K562 (cell line): ENCODE measurements at regions of chr9 and their contacts with region 1.

Region 1: GRCh38 chr9:69549310-69550202 is 122.6 kb downstream of the APBA1 start:
- DNase-seq: peak; percentile 26 to 32 (median 29)
- ATAC-seq: peak; percentile 56; the same call in 2 of the 3 replicates
- H3K4me3 ChIP-seq: no peak overlapping the region
- H3K27ac ChIP-seq: no peak overlapping the region
- H3K4me1 ChIP-seq: no peaks in the 10 kb centered on the region
- H3K27me3 ChIP-seq: peaks cover 0 to 8% of the 10 kb centered on the region in 2 experiments; a peak in 1 of 5 replicates
- CTCF ChIP-seq: peak; percentile 55 to 67 (median 62)
- EP300 ChIP-seq: no peak
- POLR2A ChIP-seq: no peak
- RAD21 ChIP-seq: peak; percentile 59 to 67

Region 2: GRCh38 chr9:69066955-69067354 is 482.6 kb before region 1 on chr9:
- CTCF ChIA-PET with region 1: no interaction called
- POLR2A ChIA-PET with region 1: no interaction called
- in situ Hi-C with region 1: loop called (anchors 25 kb)
- intact Hi-C with region 1: no loop called
- DNase-seq: peak in 2 of 4 experiments; percentile 19 to 27
- ATAC-seq: no peak
- H3K4me3 ChIP-seq: no peak overlapping the region
- H3K27ac ChIP-seq: no peak overlapping the region
- H3K4me1 ChIP-seq: no peaks in the 10 kb centered on the region; a peak in 1 of 5 replicates
- H3K27me3 ChIP-seq: no peaks in the 10 kb centered on the region
- CTCF ChIP-seq: no peak
- EP300 ChIP-seq: no peak
- POLR2A ChIP-seq: no peak
- RAD21 ChIP-seq: no peak

Region 3: GRCh38 chr9:69253057-69253456 is 296.5 kb before region 1 on chr9:
- CTCF ChIA-PET with region 1: no interaction called
- POLR2A ChIA-PET with region 1: no interaction called
- in situ Hi-C with region 1: no loop called
- intact Hi-C with region 1: no loop called
- DNase-seq: no peak
- ATAC-seq: no peak
- H3K4me3 ChIP-seq: no peak overlapping the region
- H3K27ac ChIP-seq: no peak overlapping the region
- H3K4me1 ChIP-seq: no peaks in the 10 kb centered on the region
- H3K27me3 ChIP-seq: no peaks in the 10 kb centered on the region
- CTCF ChIP-seq: no peak
- EP300 ChIP-seq: no peak
- POLR2A ChIP-seq: no peak
- RAD21 ChIP-seq: no peak

Region 4: DNA sequence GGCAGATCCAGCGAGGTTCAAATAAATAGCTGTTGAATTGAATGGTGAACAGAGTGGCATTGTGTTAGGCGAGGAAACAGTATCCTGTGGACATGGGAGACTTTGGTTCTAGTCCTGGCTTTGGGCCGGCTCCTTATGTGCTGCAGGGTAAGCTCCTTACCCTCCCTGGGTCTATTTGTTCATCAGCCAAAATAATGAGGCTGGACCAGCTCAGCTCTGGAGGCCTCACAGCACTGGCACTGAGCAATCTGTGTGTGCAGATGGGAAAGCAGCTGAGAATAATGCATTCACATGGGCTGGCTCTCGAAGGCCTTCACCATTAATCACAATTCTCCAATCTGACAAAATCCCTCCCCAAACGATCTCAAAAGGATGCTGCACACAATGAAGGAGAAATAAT is 40.7 kb after region 1 on chr9:
- CTCF ChIA-PET with region 1: no interaction called
- POLR2A ChIA-PET with region 1: no interaction called
- in situ Hi-C with region 1: no loop called
- intact Hi-C with region 1: no loop called
- DNase-seq: no peak
- ATAC-seq: no peak
- H3K4me3 ChIP-seq: no peak overlapping the region
- H3K27ac ChIP-seq: no peak overlapping the region
- H3K4me1 ChIP-seq: no peaks in the 10 kb centered on the region
- H3K27me3 ChIP-seq: no peaks in the 10 kb centered on the region
- CTCF ChIP-seq: no peak
- EP300 ChIP-seq: no peak
- POLR2A ChIP-seq: no peak
- RAD21 ChIP-seq: no peak

Region 5: GRCh38 chr9:69877854-69878514 is 328.4 kb after region 1 on chr9:
- CTCF ChIA-PET with region 1: no interaction called
- POLR2A ChIA-PET with region 1: no interaction called
- in situ Hi-C with region 1: no loop called
- intact Hi-C with region 1: loop called (anchors 5 kb)
- DNase-seq: peak in 2 of 4 experiments; percentile 10 to 24
- ATAC-seq: peak; percentile 53; the same call in 2 of the 3 replicates
- H3K4me3 ChIP-seq: no peak overlapping the region
- H3K27ac ChIP-seq: no peak overlapping the region
- H3K4me1 ChIP-seq: no peaks in the 10 kb centered on the region
- H3K27me3 ChIP-seq: no peaks in the 10 kb centered on the region
- CTCF ChIP-seq: peak; percentile 17 to 61 (median 51); a peak in 5 of 6 replicates
- EP300 ChIP-seq: no peak
- POLR2A ChIP-seq: no peak
- RAD21 ChIP-seq: peak; percentile 41 to 70